Activated CD8-positive, alpha-beta memory T cell treated with anti-CD3 and anti-CD28 coated beads, Interleukin-2, amount 10 ng/mL, durations not matched to agents 7 days and 5 days (primary cell): ENCODE measurements at regions of chr5 and their contacts with region 1.

Region 1: DNA sequence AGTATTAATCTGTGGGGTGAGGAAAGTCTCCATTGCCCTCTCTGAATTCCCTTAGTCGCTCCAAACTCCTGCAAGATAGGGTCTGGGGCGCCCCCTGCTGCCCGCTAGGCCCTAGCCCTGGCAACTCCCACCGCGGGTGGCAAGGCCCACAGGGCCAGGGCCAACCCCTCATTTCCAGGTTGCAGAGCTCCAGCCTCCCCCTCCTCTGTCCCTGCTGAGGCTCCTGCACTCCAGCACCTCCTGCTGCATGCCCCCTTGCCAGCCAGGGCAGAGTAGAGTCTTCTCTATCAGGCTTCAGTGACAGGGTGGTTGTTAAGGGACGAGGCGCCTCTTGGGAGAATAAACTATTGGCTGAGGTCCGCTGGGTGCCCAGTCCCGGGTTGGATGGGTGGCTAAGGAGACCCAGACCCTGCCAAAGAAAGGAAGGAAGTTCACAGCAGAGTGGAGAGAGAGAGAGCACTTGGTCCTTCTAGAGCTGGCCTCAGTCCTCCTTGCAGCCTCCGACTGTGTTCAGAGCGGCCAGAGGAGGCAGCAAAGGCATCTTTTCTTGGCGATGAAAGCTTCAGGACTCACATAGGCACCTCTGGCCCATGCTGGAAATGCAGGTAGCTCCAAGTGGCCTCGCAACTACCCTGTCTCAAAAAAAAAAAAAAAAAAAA is 45.6 kb downstream of the SAR1B start:
- DNase-seq: peak; percentile 89
- ATAC-seq: peak; percentile 92
- H3K4me3 Mint-ChIP-seq: no peak overlapping the region
- H3K27ac Mint-ChIP-seq: peak overlapping the region; percentile 52
- H3K4me1 Mint-ChIP-seq: peaks cover 18% of the 10 kb centered on the region
- H3K27me3 Mint-ChIP-seq: no peaks in the 10 kb centered on the region

Region 2: DNA sequence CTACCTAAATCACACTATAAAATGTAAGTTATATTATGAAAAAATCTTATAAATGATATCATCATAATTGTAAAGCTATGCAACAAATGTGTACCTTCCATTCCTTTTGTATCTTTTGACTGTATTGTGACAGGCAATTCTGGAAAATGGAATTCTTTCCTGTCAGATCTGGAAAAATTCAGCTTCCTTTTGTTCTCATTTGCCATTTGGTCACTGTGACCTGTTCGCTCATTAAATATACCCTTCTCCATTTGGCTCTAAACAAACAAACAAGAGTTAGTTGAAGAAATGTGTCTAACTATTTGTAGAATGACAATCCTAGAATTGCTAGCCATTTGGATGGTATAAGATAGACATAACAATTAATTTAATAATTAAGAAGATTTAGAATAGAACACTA is 282.7 kb before region 1 on chr5:
- CTCF ChIA-PET with region 1: interaction called, 37 read pairs
- DNase-seq: no peak
- ATAC-seq: no peak
- H3K4me3 Mint-ChIP-seq: no peak overlapping the region
- H3K27ac Mint-ChIP-seq: no peak overlapping the region
- H3K4me1 Mint-ChIP-seq: peaks cover 4% of the 10 kb centered on the region
- H3K27me3 Mint-ChIP-seq: peaks cover 2% of the 10 kb centered on the region

Region 3: DNA sequence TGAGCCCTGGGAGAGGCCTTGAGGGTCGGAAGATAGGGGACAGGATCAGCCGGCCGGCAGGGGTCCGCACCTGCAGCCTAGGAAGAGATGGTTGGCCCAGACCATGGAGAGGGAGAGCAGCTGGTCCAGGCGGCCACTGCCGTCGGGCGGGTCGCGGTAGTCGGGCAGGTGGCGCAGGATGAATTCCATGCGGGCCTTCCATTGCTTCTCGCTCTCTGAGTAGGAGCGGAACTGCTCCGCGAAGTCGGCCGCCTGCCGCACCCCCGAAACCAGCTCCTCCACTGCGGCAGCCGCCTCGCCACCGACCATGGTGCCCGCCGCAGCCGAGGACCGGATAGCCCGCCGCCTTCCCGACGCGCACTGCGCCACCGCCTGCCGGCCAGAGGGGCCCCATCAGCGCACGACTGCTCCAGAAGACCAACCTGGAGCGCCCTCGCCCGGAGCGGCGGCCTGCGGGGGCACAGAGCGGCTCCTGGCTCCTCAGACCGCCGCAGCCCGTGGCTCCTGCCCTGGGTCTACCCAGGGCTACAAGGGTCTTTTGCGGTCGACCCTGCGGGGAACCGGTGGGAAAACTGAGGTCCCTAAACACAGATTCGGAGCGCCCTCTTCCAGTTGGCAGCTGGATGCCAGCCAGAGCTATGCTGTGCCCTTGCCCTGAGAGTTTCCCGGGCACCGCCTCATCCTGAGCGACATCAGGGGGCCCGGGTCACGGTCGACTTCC is 175.3 kb before region 1 on chr5 and contains the start of gene CDKN2AIPNL:
- CTCF ChIA-PET with region 1: interaction called, 38 read pairs
- DNase-seq: peak; percentile 92
- ATAC-seq: peak; percentile 100
- H3K4me3 Mint-ChIP-seq: peak within 1 kb of the TSS; percentile 96
- H3K27ac Mint-ChIP-seq: peak within 1 kb of the TSS; percentile 87
- H3K4me1 Mint-ChIP-seq: peaks cover 30% of the 10 kb centered on the region
- H3K27me3 Mint-ChIP-seq: no peaks in the 10 kb centered on the region
- total RNA-seq, gene CDKN2AIPNL: 28.0 to 33.8 TPM

Region 4: DNA sequence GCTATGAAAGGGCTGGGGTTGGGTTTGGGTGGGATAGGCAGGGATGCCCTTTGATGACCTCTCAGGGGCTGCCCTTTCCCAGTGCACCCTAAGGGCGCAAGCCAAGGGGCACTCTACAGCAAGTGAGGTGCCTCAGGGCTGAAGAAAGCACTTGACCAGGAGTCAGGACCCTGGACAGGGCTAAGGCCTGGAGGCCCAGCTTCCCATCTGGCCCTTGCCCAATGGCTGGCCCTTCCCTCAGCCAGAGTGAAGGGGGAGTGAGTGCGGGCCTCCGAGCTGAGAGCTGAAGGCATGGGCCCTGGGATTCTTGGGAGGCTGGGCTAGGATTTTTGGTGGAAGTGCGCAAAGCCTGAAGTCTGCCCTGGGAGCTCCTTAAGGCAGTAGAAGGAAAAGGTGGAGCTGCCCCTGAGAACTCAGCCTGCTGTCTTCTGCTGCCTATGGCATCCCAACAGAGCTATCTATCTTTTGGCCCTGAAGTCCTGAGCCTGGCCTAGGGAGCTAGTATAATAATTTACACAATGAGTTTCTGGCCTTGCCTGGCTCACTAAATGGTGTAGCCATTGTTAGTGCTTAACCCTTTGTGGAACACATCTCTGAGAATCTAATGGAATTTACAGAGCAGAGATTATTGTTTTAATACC is 45.1 kb before region 1 on chr5:
- CTCF ChIA-PET with region 1: interaction called, 12 read pairs
- DNase-seq: no peak
- ATAC-seq: no peak
- H3K4me3 Mint-ChIP-seq: no peak overlapping the region
- H3K27ac Mint-ChIP-seq: no peak overlapping the region
- H3K4me1 Mint-ChIP-seq: peaks cover 38% of the 10 kb centered on the region
- H3K27me3 Mint-ChIP-seq: no peaks in the 10 kb centered on the region

Region 5: DNA sequence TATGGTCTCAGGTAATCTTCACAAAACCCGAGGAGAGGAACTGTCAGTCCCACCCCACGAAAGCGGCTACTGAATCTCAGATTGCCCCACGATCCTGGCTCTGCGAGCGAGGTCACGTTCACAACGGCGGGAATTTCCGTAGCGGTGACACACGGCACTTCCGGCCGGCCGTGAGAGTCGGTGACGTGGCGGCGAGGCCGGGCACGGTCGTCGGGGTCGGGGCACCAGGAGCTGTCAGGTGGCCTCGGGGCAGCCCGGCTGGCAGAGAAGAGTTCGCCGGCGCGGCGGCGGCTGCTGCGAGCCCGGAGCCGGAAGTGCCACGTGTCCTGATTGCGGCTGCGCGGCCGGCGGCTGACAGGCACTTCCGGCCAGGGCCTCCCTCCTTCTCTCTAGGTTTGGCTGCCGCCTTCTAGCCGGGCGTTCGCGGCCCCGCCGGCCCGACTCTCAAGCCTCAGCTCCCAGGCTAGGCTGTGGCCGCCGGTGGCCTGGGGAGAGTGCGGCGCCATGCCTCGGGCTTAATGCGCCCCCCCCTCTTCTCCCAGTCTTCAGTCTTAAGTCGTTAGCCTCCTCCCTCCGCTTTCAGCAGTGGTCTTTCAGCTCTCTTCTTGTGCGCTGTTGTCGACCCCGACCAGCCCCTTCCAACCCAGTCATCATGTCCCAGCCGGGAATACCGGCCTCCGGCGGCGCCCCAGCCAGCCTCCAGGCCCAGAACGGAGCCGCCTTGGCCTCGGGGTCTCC is 61.6 kb after region 1 on chr5 and contains the start of gene SEC24A:
- CTCF ChIA-PET with region 1: interaction called, 13 read pairs
- DNase-seq: peak; percentile 94
- ATAC-seq: peak; percentile 92
- H3K4me3 Mint-ChIP-seq: peak within 1 kb of the TSS; percentile 87
- H3K27ac Mint-ChIP-seq: peak within 1 kb of the TSS; percentile 96
- H3K4me1 Mint-ChIP-seq: peaks cover 28% of the 10 kb centered on the region
- H3K27me3 Mint-ChIP-seq: no peaks in the 10 kb centered on the region
- total RNA-seq, gene SEC24A: 19.8 to 25.2 TPM